SK-N-SH (cell line): ENCODE measurements at regions of chr6 and their contacts with region 1.

Region 1: GRCh38 chr6:33425668-33426577 is 6.1 kb downstream of the SYNGAP1 start:
- DNase-seq: peak; percentile 94
- H3K4me3 ChIP-seq: peak overlapping the region; percentile 54 to 72
- H3K27ac ChIP-seq: peak overlapping the region; percentile 89 to 90
- H3K4me1 ChIP-seq: peaks cover 25 to 48% of the 10 kb centered on the region in 2 experiments
- H3K27me3 ChIP-seq: no peaks in the 10 kb centered on the region
- CTCF ChIP-seq: peak; percentile 71
- EP300 ChIP-seq: no peak
- RAD21 ChIP-seq: peak; percentile 65

Region 2: DNA sequence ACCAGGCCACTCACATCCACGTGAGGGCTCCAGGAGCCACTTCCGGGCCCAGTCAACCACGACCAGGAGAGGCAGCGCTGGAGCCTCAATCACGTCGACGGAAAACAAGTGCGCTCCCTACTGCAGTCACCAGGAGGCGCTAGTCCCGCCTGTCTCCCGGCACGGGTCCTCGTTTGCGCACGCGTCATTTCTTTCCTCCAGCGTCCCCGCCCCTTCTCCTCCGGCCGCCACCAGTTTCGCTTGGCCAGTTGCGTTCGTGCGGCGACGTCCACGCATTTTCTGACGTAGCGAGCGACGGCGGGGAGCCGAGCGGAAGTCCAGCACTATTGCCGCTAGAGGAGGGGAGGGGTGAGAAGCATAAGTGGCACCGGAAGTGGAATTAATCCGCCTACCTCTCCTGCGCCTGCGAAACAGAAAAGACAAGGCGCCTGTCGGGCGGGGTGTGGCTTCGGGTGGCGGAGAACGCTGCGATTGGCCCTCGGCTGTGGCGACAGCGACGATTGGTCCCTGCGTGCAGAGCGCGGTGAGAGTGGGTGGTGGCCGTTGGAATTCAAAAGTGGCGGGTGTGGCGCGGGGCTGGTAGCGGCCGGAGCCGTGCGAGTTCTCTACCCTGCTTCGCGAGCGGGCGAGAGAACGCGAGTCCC is 34.5 kb before region 1 on chr6 and contains the start of gene KIFC1:
- CTCF ChIA-PET with region 1: interaction called, 22 read pairs
- POLR2A ChIA-PET with region 1: no interaction called
- DNase-seq: peak; percentile 93
- H3K4me3 ChIP-seq: peak within 1 kb of the TSS; percentile 66 to 92
- H3K27ac ChIP-seq: peak within 1 kb of the TSS; percentile 84 to 87
- H3K4me1 ChIP-seq: peaks cover 0 to 16% of the 10 kb centered on the region in 2 experiments; a peak in 3 of 4 replicates
- H3K27me3 ChIP-seq: no peaks in the 10 kb centered on the region
- CTCF ChIP-seq: peak; percentile 87
- EP300 ChIP-seq: no peak; a peak in 1 of 4 replicates
- RAD21 ChIP-seq: peak; percentile 67
- polyA plus RNA-seq, gene KIFC1: 29.6 and 35.9 TPM in 2 replicates

Region 3: GRCh38 chr6:33439956-33440648 is 14.2 kb after region 1 on chr6:
- CTCF ChIA-PET with region 1: interaction called, 16 read pairs
- POLR2A ChIA-PET with region 1: no interaction called
- DNase-seq: peak; percentile 9
- H3K4me3 ChIP-seq: no peak overlapping the region
- H3K27ac ChIP-seq: no peak overlapping the region
- H3K4me1 ChIP-seq: no peaks in the 10 kb centered on the region
- H3K27me3 ChIP-seq: no peaks in the 10 kb centered on the region
- CTCF ChIP-seq: no peak
- EP300 ChIP-seq: no peak
- RAD21 ChIP-seq: no peak

Region 4: GRCh38 chr6:33467091-33467490 is 41.2 kb after region 1 on chr6:
- CTCF ChIA-PET with region 1: no interaction called
- POLR2A ChIA-PET with region 1: no interaction called
- DNase-seq: no peak
- H3K4me3 ChIP-seq: no peak overlapping the region
- H3K27ac ChIP-seq: no peak overlapping the region
- H3K4me1 ChIP-seq: no peaks in the 10 kb centered on the region
- H3K27me3 ChIP-seq: no peaks in the 10 kb centered on the region
- CTCF ChIP-seq: no peak
- EP300 ChIP-seq: no peak
- RAD21 ChIP-seq: no peak

Region 5: GRCh38 chr6:34106900-34107573 is 681.1 kb after region 1 on chr6:
- CTCF ChIA-PET with region 1: no interaction called
- POLR2A ChIA-PET with region 1: no interaction called
- DNase-seq: no peak
- H3K4me3 ChIP-seq: no peak overlapping the region
- H3K27ac ChIP-seq: no peak overlapping the region
- H3K4me1 ChIP-seq: peaks cover 0 to 8% of the 10 kb centered on the region in 2 experiments; a peak in 1 of 4 replicates
- H3K27me3 ChIP-seq: peaks cover 22% of the 10 kb centered on the region
- CTCF ChIP-seq: no peak
- EP300 ChIP-seq: no peak
- RAD21 ChIP-seq: no peak